ENCODE measurements at regions of chr1 and their contacts with region 1.

Region 1: DNA sequence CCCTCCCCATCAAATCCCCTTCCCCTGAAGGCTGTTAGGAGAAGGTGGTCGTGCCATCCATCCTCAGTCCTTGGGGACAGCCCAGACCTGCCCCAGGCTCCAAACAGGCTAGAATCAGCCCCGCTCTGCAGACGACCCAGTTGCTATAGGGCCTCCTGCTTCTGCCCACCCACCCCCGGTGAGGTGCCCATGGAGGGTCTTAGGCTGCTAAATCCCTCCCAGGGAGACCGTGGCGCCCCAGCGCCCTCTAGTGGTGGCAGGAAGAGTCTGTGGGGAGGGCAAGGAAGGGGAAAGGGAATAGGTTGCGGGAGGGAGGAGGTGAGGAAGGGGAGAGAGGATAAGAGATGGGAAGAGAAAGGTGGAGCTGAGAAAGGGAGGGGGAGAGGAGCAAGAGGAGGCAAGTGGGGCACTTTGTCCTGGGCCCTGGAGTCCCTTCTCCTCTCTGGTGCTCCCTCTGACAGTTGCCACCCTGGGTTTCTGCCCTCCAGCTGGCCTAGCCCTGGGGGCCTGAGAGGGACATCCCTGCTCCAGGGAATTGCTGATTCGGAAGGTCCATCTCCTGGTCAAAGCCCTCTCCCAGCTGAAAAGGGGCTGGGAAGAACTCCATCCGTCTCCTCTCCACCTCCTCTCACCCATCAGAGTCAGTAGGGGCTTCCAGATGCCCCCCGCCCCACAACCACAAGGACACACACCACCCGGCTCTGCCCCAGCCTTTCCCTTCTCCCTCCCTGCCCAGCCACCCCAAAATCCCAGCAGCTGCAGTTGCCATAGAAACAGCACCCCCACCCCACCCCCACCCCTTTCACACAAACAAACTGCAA is 55.4 kb downstream of the CAMK2N1 start:
- DNase-seq: no peak
- H3K4me3 ChIP-seq: no peak overlapping the region
- H3K27ac ChIP-seq: no peak overlapping the region
- H3K4me1 ChIP-seq: peaks cover 14% of the 10 kb centered on the region
- H3K27me3 ChIP-seq: no peaks in the 10 kb centered on the region
- CTCF ChIP-seq: peak; percentile 80 to 89

Region 2: GRCh38 chr1:19643602-19644394 is 786.8 kb before region 1 on chr1 and contains the start of gene NBL1:
- CTCF ChIA-PET with region 1: interaction called, 18 read pairs
- dilution Hi-C with region 1: no loop called
- in situ Hi-C with region 1: no loop called
- intact Hi-C with region 1: no loop called
- DNase-seq: peak; percentile 57
- H3K4me3 ChIP-seq: peak within 1 kb of the TSS; percentile 65 to 88 (median 81)
- H3K27ac ChIP-seq: peak within 1 kb of the TSS; percentile 80
- H3K4me1 ChIP-seq: peaks cover 63% of the 10 kb centered on the region
- H3K27me3 ChIP-seq: no peaks in the 10 kb centered on the region
- CTCF ChIP-seq: no peak
- total RNA-seq, gene NBL1: 49.7 to 132 TPM

Region 3: GRCh38 chr1:19974822-19975416 is 455.6 kb before region 1 on chr1:
- CTCF ChIA-PET with region 1: interaction called, 10 read pairs
- dilution Hi-C with region 1: no loop called
- in situ Hi-C with region 1: no loop called
- intact Hi-C with region 1: loop called (anchors 10 kb)
- DNase-seq: peak; percentile 86
- H3K4me3 ChIP-seq: no peak overlapping the region
- H3K27ac ChIP-seq: no peak overlapping the region
- H3K4me1 ChIP-seq: peaks cover 6% of the 10 kb centered on the region
- H3K27me3 ChIP-seq: no peaks in the 10 kb centered on the region
- CTCF ChIP-seq: peak; percentile 100

Region 4: DNA sequence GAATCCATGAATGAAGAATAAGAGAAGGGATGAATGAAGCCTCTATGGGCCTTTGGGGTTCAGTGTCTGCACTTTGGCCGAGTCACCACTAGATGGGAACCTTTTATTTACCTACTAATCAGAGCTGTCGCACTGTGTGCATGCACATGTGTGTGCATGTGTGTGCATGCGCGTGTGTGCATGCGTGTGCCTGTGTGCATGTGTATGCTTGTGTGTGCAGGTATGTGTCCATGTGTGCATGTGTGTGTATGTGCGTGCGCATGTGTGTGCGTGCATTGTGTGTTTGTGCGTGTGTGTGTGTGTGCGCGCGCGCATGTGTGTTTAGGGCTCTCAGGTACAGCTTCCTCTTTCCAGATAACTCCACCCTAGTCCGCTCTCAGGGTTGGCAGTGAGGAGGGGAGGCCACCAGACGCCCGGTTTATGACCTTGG is 265.0 kb before region 1 on chr1:
- CTCF ChIA-PET with region 1: interaction called, 6 read pairs
- dilution Hi-C with region 1: no loop called
- in situ Hi-C with region 1: no loop called
- intact Hi-C with region 1: loop called (anchors 1 kb)
- DNase-seq: peak; percentile 52
- H3K4me3 ChIP-seq: no peak overlapping the region
- H3K27ac ChIP-seq: no peak overlapping the region
- H3K4me1 ChIP-seq: peaks cover 29% of the 10 kb centered on the region
- H3K27me3 ChIP-seq: no peaks in the 10 kb centered on the region
- CTCF ChIP-seq: peak; percentile 55 to 64

Region 5: GRCh38 chr1:20361806-20362640 is 68.5 kb before region 1 on chr1:
- CTCF ChIA-PET with region 1: interaction called, 3 read pairs
- dilution Hi-C with region 1: no loop called
- in situ Hi-C with region 1: no loop called
- intact Hi-C with region 1: loop called (anchors 1 kb)
- DNase-seq: peak; percentile 55
- H3K4me3 ChIP-seq: no peak overlapping the region
- H3K27ac ChIP-seq: no peak overlapping the region
- H3K4me1 ChIP-seq: peaks cover 41% of the 10 kb centered on the region
- H3K27me3 ChIP-seq: peaks cover 5% of the 10 kb centered on the region
- CTCF ChIP-seq: peak; percentile 95 to 98

Region 6: DNA sequence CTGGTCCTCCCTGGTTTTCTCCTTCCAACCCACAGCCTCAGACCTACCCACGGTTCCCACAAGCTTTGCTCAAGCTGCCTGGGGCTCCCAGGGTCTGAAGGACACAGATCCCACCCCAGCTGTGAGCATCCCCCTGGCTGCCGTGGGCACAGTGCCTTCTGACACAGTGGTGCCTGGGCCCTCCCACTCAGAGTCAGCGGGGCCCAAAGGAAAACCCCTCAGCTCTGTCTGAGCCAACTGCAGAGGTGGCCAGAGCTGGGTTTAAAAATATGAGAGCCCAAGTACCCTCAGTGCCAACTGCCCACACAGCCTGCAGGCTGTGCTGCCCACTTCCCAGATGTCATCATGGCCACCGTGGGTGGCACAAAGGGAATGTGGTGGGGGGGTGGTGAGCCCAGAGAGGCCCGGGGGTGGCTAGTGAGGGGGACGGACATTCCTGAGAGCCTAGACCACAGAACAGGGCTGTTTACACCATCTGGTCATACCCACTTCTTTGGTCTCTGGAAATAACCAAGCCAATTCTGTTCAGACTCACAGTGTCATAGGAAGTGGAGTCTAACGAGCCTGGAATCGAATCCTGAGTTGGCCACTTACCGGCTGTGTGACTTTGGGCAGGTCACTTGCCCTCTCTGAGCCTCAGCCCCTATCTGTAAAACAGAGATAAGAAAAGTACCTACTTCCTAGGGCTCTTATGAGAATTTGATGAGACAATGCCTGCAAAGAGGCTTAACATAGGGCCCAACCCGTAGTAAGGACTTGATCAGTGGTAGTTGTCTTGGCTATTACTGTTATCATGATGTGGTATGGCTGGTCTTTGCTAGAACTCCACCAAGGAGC is 30.0 kb before region 1 on chr1:
- CTCF ChIA-PET with region 1: no interaction called
- dilution Hi-C with region 1: no loop called
- in situ Hi-C with region 1: no loop called
- intact Hi-C with region 1: no loop called
- DNase-seq: no peak
- H3K4me3 ChIP-seq: no peak overlapping the region
- H3K27ac ChIP-seq: no peak overlapping the region
- H3K4me1 ChIP-seq: no peaks in the 10 kb centered on the region
- H3K27me3 ChIP-seq: no peaks in the 10 kb centered on the region
- CTCF ChIP-seq: no peak